ENCODE measurements at regions of chr22 and their contacts with region 1.

Region 1: GRCh38 chr22:30920407-30920806 is 48.2 kb downstream of the MORC2 start:
- DNase-seq: peak; percentile 67 to 88 (median 75)
- ATAC-seq: peak in 3 of 4 donors; percentile 63 to 65 (median 64)
- H3K4me3 ChIP-seq: peak overlapping the region in 4 of 12 donors; percentile 2 to 60 (median 17)
- H3K27ac ChIP-seq: no peak overlapping the region
- H3K4me1 ChIP-seq: peaks cover 0 to 24% (median 7%) of the 10 kb centered on the region in 12 donors
- H3K27me3 ChIP-seq: no peaks in the 10 kb centered on the region
- CTCF ChIP-seq: peak; percentile 87 to 98 (median 91)
- POLR2A ChIP-seq: no peak

Region 2: DNA sequence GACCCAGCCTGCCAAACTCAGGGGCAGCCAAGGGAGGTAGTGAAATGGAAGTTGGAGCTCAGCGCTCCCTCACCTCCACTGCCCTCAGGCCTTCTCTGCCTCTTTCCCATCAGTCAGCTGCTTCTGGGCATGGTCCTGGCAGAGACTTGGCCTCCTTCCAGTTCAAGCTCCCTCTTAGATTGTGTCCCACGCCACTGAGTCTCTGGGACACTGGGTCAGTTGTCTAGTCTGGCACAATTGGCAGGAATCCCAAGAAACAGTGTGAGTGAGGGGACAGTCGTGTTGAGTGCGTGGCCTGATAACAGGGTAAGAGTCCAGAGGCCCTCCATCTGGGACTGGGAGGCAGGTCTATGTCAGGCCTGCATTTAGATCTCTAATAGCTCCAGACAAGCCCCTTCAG is 291.9 kb before region 1 on chr22:
- intact Hi-C with region 1: loop called in 4 of 10 experiments (anchors 5 to 10 kb)
- DNase-seq: peak in 4 of 5 donors; percentile 32 to 72 (median 42)
- ATAC-seq: peak; percentile 54 to 91 (median 72)
- H3K4me3 ChIP-seq: no peak overlapping the region
- H3K27ac ChIP-seq: peak overlapping the region in 2 of 12 donors; percentile 14 to 16
- H3K4me1 ChIP-seq: peaks cover 0 to 16% (median 0%) of the 10 kb centered on the region in 12 donors
- H3K27me3 ChIP-seq: no peaks in the 10 kb centered on the region
- CTCF ChIP-seq: no peak
- POLR2A ChIP-seq: no peak

Region 3: DNA sequence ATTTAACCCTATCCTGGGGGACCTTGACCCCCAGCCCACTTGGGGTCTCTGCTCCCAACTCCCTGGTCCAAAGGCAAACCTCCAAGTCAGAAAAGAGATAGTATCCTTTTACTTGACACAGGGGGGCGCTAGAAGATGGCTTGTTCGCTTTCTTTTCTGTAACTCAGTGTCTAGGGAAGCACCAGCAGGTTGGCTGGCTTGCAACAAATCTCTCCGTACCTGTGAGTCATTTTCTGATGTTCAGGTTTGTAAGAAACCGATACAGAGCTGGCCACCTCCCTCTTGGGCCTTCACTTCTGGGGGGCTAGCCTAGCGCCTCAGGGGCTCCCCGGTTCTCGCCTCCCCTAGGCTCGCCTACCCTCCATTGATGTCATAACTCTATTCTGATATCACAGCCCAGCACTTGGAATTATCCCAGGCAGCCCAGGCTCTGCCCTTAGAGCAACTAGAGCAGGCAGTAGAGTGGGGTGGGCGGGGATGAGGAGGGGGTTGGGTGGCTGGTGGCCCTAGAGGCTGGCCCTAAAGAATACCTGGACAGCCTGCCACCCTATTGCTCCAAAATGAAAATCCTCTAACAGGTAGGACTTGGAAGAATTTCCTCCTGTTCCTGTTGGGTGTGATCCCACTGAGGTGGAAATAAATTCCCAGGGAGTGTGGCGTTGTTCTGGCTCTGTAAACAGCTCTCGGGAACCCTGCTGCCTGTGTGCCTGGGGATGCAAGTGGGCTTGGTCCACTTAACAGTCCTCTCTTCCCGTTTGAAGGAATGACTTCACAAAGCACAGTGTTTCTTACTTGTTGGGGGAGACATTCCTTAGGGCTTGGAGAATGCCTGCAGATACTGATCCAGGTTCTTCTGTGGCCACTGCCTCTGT is 156.4 kb before region 1 on chr22:
- intact Hi-C with region 1: loop called (anchors 1 to 2 kb)
- DNase-seq: peak in 3 of 5 donors; percentile 38 to 48 (median 44)
- ATAC-seq: peak; percentile 56 to 84 (median 76)
- H3K4me3 ChIP-seq: no peak overlapping the region
- H3K27ac ChIP-seq: no peak overlapping the region
- H3K4me1 ChIP-seq: peaks cover 0 to 5% (median 0%) of the 10 kb centered on the region in 12 donors
- H3K27me3 ChIP-seq: no peaks in the 10 kb centered on the region
- CTCF ChIP-seq: peak; percentile 40 to 73 (median 61)
- POLR2A ChIP-seq: no peak

Region 4: DNA sequence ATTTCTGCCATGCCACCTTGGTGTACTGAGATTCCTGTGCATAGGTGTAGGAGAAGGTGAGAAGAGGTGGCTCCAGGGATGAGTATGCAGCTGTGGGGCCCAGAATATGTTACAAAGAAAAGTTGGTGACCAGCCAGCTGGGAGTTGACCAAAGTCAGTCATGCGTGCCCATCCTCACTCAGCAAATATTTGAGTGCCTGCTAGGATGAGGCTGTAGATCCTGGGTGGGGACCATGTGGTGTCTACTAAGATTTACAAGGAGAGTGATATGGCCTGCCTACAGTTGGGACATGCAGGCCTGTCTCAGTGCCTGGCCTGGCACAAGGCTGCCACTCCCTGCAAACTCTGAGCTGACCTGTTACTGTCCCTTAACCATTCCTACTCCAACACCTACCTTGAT is 258.9 kb after region 1 on chr22:
- intact Hi-C with region 1: no loop called
- DNase-seq: no peak
- ATAC-seq: peak in 3 of 4 donors; percentile 48 to 62 (median 59)
- H3K4me3 ChIP-seq: no peak overlapping the region
- H3K27ac ChIP-seq: no peak overlapping the region
- H3K4me1 ChIP-seq: peaks cover 0 to 18% (median 5%) of the 10 kb centered on the region in 12 donors
- H3K27me3 ChIP-seq: no peaks in the 10 kb centered on the region
- CTCF ChIP-seq: no peak
- POLR2A ChIP-seq: no peak